ENCODE measurements at regions of chr19 and their contacts with region 1.

Region 1: GRCh38 chr19:58305065-58305931 is at the start of gene ERVK3-1:
- DNase-seq: peak; percentile 96 to 98 (median 98)
- ATAC-seq: peak; percentile 99 to 100 (median 100)
- H3K4me3 ChIP-seq: peak within 1 kb of the TSS; percentile 50 to 94 (median 82)
- H3K27ac ChIP-seq: peak within 1 kb of the TSS; percentile 76 to 94 (median 88)
- H3K4me1 ChIP-seq: peaks cover 0 to 23% (median 13%) of the 10 kb centered on the region in 12 donors
- H3K27me3 ChIP-seq: no peaks in the 10 kb centered on the region
- CTCF ChIP-seq: peak in 6 of 12 donors; percentile 10 to 38 (median 16)
- POLR2A ChIP-seq: peak; percentile 7 to 87
- total RNA-seq, gene ERVK3-1: 12.8 to 39.2 (median 20.3) TPM

Region 2: DNA sequence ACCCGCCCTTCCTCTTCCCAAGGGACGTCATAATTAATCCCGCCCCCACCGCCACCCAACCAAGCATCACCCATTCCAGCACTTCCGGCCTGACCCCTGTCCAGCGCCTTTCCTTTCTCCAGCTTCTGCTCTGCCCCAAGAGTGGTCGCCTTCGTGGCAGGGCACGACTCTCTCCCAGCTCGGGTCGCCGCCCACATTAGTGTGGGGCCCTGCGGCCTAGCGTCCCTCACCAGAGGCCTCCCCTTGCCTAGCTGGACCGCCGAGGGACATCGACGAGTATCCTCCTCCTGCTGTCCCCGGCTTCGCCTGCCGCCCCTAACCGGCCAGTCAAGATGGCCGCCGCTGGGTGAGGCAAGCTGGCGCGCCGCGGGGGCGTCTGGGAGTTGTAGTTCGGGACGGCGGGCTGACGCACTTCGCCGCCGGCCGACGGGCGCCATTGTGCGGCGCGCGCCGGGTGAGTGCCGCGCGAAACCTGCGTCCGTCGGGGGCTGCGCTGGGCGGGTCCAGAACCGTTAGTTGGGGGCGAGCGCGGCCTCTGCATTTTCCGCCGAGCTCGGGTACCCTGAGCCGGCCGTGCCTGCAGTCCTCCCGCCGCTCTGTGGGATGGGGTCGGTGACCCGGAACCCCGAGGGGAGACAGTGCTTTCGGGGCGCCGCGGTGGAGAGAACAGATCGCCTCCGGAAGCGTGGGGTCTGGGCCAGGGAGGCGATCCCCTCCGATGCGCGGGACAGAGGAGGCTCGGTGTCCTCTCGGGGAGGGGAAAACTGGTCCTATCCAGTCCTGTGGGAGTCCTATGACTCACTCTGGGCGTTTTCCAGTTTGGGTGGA is 122.1 kb before region 1 on chr19 and contains the start of gene ZNF274:
- intact Hi-C with region 1: loop called in 5 of 10 experiments (anchors 5 kb)
- DNase-seq: peak; percentile 95 to 97 (median 96)
- ATAC-seq: peak; percentile 94 to 96 (median 96)
- H3K4me3 ChIP-seq: peak within 1 kb of the TSS; percentile 73 to 100 (median 94)
- H3K27ac ChIP-seq: peak within 1 kb of the TSS; percentile 90 to 100 (median 99)
- H3K4me1 ChIP-seq: peaks cover 0 to 18% (median 5%) of the 10 kb centered on the region in 12 donors
- H3K27me3 ChIP-seq: no peaks in the 10 kb centered on the region
- CTCF ChIP-seq: no peak
- POLR2A ChIP-seq: peak; percentile 48 to 92
- total RNA-seq, gene ZNF274: 16.2 to 29.0 (median 21.8) TPM

Region 3: DNA sequence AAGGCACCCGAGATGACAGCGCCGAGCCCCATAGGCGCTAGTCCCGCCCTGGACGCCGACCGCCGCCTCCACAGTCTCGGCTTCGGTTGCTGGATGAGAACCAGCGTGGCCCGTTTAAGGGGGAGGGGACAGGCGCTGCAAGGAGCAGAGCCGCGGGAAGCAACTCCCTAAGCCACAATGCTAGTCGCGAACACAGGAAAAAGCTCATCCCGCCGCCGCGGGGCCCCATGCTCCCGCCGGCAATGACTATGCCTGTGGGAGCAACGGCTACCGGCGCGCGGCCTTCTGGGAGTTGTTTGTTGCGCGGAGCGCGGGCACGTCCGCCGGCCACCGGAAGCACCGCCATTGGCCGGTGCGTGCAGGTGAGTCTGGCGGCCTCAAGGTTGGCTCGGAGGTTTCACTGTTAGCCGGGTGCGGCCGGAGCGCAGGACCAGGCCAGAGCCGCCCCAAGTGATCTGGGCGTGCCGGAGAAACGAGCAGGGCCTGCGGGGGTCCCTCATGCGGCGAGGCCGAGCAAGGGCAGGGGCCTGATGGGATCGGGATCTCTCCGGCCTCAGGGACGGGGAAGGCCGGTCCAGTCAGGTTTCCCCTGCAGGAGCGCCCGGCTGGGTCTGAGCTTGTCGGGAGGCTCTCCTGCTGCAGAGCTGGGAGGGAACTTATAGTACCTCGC is 76.6 kb before region 1 on chr19 and contains the start of gene ZNF544:
- intact Hi-C with region 1: loop called in 4 of 10 experiments (anchors 2 to 5 kb)
- DNase-seq: peak; percentile 80 to 89 (median 83)
- ATAC-seq: peak; percentile 91 to 99 (median 98)
- H3K4me3 ChIP-seq: peak within 1 kb of the TSS; percentile 75 to 97 (median 86)
- H3K27ac ChIP-seq: peak within 1 kb of the TSS; percentile 73 to 95 (median 88)
- H3K4me1 ChIP-seq: peaks cover 0 to 21% (median 15%) of the 10 kb centered on the region in 12 donors
- H3K27me3 ChIP-seq: no peaks in the 10 kb centered on the region
- CTCF ChIP-seq: peak in 4 of 12 donors; percentile 6 to 34 (median 13)
- POLR2A ChIP-seq: peak in 1 of 2 donors; percentile 19
- total RNA-seq, gene ZNF544: 20.8 to 38.7 (median 22.1) TPM

Region 4: GRCh38 chr19:58278157-58279041 is 26.9 kb before region 1 on chr19 and contains the start of gene ZNF8:
- intact Hi-C with region 1: loop called in 2 of 10 experiments (anchors 2 kb)
- DNase-seq: peak; percentile 98
- ATAC-seq: peak; percentile 95 to 96 (median 95)
- H3K4me3 ChIP-seq: peak within 1 kb of the TSS; percentile 75 to 97 (median 83)
- H3K27ac ChIP-seq: peak within 1 kb of the TSS; percentile 91 to 98 (median 94)
- H3K4me1 ChIP-seq: peaks cover 0 to 28% (median 16%) of the 10 kb centered on the region in 12 donors
- H3K27me3 ChIP-seq: no peaks in the 10 kb centered on the region
- CTCF ChIP-seq: peak in 5 of 12 donors; percentile 14 to 40 (median 27)
- POLR2A ChIP-seq: peak in 1 of 2 donors; percentile 72
- total RNA-seq, gene ZNF8: 4.0 to 7.8 (median 5.5) TPM

Measured in heart left ventricle (tissue), 16 donors.